ENCODE measurements at regions of chr6 and their contacts with region 1.

Region 1: DNA sequence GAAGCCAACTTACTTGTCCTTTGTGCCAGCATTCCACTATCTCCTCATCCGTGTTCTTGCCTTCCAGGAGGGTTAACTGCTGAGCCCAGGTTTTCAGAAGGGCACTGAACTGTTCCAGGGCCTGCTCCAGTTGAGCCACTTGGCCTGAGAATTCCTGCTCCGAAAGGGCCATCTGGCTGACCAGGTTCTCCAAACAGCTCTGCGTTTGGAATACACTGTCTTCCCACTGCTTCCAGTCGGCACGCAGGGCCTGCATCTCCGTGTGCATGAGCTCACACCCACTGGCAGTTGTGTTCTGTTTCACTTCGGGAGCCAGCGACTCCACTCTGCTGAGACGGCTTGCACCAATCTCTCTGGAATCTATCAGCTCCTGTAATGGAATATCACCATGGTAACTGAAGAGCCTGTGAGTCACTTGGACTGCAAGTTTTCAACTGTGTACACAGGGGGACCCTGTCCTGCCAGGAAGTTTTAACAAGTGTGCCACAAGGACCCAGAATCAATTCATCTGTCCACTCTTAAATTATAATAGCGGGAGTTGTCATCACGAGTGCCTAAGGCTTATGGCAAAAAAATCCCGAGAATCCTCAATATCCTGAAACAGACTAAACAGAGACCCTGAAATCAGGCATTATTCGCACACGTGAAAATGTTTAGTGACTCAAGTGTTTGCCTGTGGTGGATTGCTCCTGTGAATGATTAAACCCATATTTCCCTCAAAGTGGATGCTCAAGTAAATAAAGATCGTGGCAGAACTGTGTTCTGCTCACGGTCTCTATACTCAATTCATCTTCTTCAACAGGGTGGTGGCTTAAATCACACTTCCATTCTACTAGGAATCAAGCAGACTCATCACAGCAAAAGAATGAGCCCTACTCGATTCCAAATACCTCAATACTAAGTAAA is 255.9 kb downstream of the SYNE1 start:
- DNase-seq: peak; percentile 60
- H3K4me3 Mint-ChIP-seq: peak overlapping the region; percentile 86
- H3K27ac Mint-ChIP-seq: peak overlapping the region; percentile 99
- H3K4me1 Mint-ChIP-seq: peaks cover 29% of the 10 kb centered on the region
- H3K27me3 Mint-ChIP-seq: no peaks in the 10 kb centered on the region
- CTCF ChIP-seq: no peak

Region 2: DNA sequence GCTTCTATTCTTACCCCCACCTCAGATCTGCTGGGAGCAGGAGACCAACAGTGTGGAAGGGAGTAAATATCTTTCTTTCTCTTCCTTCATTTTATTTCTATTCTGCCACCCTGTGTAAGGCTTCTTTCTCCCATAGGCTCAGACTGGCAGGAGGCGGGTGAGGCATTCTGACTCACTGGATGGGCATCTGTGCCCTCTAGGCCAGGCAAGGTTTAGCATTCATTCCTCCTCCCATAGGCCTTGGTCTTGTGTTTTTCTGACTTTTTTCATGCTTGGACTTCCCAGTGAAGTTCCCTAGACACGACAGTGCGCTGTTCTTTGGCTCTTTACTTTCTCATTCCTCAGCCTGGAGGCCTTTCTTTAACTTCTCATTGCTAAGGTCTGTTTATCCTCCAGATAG is 20.7 kb after region 1 on chr6:
- CTCF ChIA-PET with region 1: no interaction called
- intact Hi-C with region 1: loop called (anchors 2 kb)
- DNase-seq: peak; percentile 68
- H3K4me3 Mint-ChIP-seq: peak overlapping the region; percentile 55
- H3K27ac Mint-ChIP-seq: peak overlapping the region; percentile 71
- H3K4me1 Mint-ChIP-seq: peaks cover 33% of the 10 kb centered on the region
- H3K27me3 Mint-ChIP-seq: no peaks in the 10 kb centered on the region
- CTCF ChIP-seq: no peak

Region 3: GRCh38 chr6:152458648-152459644 is 77.7 kb after region 1 on chr6:
- CTCF ChIA-PET with region 1: no interaction called
- intact Hi-C with region 1: loop called (anchors 2 kb)
- DNase-seq: no peak
- H3K4me3 Mint-ChIP-seq: no peak overlapping the region
- H3K27ac Mint-ChIP-seq: peak overlapping the region; percentile 79
- H3K4me1 Mint-ChIP-seq: peaks cover 17% of the 10 kb centered on the region
- H3K27me3 Mint-ChIP-seq: no peaks in the 10 kb centered on the region
- CTCF ChIP-seq: no peak

Region 4: DNA sequence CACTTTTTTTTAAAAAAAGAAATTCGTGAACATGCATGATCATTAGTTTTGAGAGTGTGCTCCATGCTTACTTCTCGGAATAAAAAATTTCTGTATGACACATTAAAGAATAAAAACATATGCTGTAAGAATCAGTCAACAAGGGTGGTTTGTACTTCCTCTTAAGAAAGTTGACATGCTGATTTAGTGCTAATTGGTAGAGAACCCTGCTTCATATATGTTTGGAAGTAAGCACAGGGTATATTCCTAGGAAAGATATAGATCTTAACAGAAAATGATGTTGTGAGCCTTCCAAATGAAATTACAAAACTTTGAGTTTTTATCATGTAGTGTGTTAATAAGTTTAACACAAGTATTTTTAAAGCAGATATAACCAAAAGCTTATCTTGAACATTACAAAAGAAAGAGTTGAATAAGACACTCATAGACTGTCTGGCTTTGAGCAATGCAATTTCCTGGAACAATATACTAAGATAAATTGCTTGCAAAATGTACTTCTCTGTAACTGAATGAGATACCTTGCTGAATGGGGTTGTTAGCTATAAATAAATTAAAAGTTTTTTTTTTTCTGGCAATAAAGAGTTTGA is 355.5 kb after region 1 on chr6:
- CTCF ChIA-PET with region 1: no interaction called
- intact Hi-C with region 1: no loop called
- DNase-seq: no peak
- H3K4me3 Mint-ChIP-seq: no peak overlapping the region
- H3K27ac Mint-ChIP-seq: no peak overlapping the region
- H3K4me1 Mint-ChIP-seq: no peaks in the 10 kb centered on the region
- H3K27me3 Mint-ChIP-seq: no peaks in the 10 kb centered on the region
- CTCF ChIP-seq: no peak

Measured in Calu3 (cell line).